Activated CD8-positive, alpha-beta T cell treated with anti-CD3 and anti-CD28 coated beads, Interleukin-2, amount 10 ng/mL, durations not matched to agents 7 days and 5 days (primary cell): ENCODE measurements at regions of chr2 and their contacts with region 1.

Region 1: GRCh38 chr2:218516614-218517013 is 51.5 kb downstream of the USP37 start:
- DNase-seq: peak; percentile 33
- ATAC-seq: peak; percentile 61
- H3K4me3 Mint-ChIP-seq: no peak overlapping the region
- H3K27ac Mint-ChIP-seq: no peak overlapping the region
- H3K4me1 Mint-ChIP-seq: peaks cover 14% of the 10 kb centered on the region
- H3K27me3 Mint-ChIP-seq: no peaks in the 10 kb centered on the region

Region 2: DNA sequence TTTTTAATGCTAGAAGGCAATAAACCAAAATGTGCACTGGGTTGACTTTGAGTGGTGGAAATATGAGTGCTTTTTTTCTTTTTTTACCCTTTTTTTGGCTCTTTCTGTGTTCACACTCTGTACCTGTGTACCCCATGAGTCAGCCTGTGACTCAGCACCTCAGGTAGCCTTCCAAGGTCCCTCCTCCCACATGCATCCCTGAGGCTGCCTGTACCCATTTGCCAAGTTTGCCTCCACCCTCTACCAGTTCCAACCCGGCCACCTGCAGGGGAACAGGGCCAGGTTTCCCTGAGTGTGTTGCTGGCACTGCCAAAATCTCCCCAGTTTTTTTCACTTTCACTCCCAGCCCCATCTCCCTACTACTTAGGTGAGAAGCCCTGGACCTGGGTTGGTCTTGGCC is 363.8 kb before region 1 on chr2:
- CTCF ChIA-PET with region 1: no interaction called
- POLR2A ChIA-PET with region 1: no interaction called
- DNase-seq: no peak
- ATAC-seq: no peak
- H3K4me3 Mint-ChIP-seq: no peak overlapping the region
- H3K27ac Mint-ChIP-seq: no peak overlapping the region
- H3K4me1 Mint-ChIP-seq: no peaks in the 10 kb centered on the region
- H3K27me3 Mint-ChIP-seq: peaks cover 15% of the 10 kb centered on the region

Region 3: DNA sequence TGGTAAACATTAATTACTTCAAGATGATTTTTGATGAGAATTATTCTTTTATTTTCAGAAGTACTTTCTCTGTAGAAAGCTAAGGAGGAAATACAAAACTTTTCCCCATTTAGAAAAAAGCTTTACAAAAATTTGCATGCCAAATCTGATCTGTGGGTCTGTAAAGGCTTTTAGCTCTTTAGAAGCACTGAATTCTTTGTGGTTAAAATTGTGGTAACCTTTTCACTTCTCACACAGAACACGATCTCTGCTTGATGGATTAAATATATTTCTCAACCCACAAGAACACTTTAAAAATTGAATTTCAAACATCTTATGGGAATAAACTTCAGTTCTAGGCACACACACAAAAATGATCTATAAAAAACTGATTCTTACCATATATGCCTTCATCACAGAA is 34.0 kb before region 1 on chr2:
- CTCF ChIA-PET with region 1: no interaction called
- POLR2A ChIA-PET with region 1: no interaction called
- DNase-seq: no peak
- ATAC-seq: no peak
- H3K4me3 Mint-ChIP-seq: no peak overlapping the region
- H3K27ac Mint-ChIP-seq: no peak overlapping the region
- H3K4me1 Mint-ChIP-seq: peaks cover 14% of the 10 kb centered on the region
- H3K27me3 Mint-ChIP-seq: no peaks in the 10 kb centered on the region

Region 4: DNA sequence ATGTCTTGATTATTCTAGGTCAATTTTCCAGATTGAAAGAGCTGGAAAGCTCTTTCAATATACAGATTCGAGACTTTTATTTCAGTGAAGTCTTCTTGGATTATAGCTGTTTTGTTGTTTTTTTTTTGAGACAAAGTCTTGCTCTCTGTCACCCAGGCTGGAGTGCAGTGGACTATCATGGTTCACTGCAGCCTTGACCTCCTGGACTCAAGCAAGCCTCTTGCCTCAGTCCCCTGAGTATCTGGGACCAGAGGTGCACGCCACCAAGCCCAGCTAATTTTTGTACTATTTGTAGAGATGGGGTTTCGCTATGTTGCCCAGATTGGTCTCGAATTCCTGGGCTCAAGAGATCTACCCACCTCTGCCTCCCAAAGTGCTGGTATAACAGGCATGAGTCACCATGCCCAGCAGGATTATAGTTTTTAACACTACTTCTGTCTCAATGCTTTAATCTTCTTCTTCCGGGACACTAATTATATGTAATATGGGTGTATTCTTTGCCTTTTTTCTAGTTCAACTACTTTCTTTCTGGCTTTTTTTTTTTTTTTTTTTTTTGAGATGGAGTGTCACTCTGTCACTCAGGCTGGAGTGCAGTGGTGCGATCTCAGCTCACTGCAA is 10.8 kb before region 1 on chr2:
- CTCF ChIA-PET with region 1: interaction called, 15 read pairs
- POLR2A ChIA-PET with region 1: no interaction called
- DNase-seq: no peak
- ATAC-seq: no peak
- H3K4me3 Mint-ChIP-seq: no peak overlapping the region
- H3K27ac Mint-ChIP-seq: no peak overlapping the region
- H3K4me1 Mint-ChIP-seq: peaks cover 8% of the 10 kb centered on the region
- H3K27me3 Mint-ChIP-seq: no peaks in the 10 kb centered on the region

Region 5: DNA sequence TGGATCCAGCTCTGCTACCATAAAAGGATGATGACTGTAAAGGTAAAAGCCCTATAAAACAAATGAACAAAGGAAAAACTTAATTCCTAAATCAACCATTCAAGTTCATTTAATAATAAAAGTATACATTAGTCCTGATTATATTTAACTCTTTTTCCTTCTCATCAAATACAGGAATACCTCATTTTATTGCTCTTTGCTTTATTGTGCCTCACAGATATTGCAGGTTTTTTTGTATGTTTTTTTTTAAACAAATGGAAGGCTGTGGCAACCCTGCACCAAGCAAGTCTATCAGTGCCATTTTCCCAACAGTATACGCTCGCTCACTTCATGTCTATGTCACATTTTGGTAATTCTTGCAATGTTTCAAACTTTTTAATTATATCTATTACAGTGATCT is 13.4 kb after region 1 on chr2:
- CTCF ChIA-PET with region 1: interaction called, 36 read pairs
- POLR2A ChIA-PET with region 1: no interaction called
- DNase-seq: no peak
- ATAC-seq: no peak
- H3K4me3 Mint-ChIP-seq: no peak overlapping the region
- H3K27ac Mint-ChIP-seq: no peak overlapping the region
- H3K4me1 Mint-ChIP-seq: peaks cover 2% of the 10 kb centered on the region
- H3K27me3 Mint-ChIP-seq: no peaks in the 10 kb centered on the region